PC-9 (cell line): ENCODE measurements at regions of chr19 and their contacts with region 1.

Region 1: DNA sequence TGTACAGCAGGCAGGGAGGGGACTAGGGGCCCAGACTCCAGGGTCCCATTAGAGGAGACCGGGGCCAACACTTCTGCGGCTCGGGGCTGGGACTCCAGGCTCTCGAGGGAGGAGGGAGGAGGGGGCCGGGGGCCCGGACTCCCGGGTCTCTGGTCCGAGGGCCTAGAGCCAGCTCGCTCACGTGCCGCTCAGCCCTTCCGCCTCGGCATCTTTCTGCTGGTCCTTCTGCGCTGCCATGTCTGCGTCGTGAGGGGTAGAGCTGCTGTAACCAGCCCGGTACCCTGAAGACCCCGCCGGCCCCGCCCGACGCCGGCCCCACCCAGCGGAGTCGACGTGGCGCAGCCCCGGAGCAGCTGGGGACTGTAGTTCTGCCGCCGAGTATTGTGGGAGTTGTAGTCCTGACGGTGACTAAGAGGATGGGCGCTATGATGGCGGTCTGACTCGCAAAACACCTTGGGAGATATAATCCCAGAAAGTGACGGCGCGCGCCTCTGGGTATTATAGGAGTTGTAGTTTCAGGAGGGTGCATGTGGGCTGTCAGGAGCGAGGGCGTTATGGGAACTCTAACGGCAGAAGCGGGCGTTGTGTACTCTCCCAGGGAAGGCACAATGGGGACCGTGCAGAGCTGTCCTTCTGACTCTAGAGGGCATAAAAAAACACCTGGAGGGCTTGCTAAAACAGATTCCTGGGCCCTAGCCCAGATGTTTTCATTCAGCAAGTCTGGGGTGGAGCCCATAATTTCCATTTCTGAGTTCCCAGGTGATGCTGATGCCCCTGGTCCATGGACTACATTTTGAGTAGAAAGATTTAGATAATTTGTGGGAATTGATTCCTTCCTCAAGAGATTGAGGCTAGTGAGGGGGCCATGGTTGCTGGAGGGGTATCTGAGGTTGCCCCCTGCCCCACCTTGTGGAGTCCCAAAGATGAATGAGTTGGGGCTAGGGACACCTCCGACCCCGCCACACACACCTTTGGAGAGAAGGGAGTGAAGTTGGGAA is at the start of gene RABAC1:
- DNase-seq: peak; percentile 84 to 86
- H3K4me3 ChIP-seq: peak within 1 kb of the TSS; percentile 67
- H3K27ac ChIP-seq: peak within 1 kb of the TSS; percentile 24; the same call in 1 of the 2 replicates
- H3K4me1 ChIP-seq: peaks cover 11% of the 10 kb centered on the region
- H3K27me3 ChIP-seq: no peaks in the 10 kb centered on the region
- CTCF ChIP-seq: 0 out of 2 replicates have a peak, but pooled peaks have one; percentile 32
- total RNA-seq, gene RABAC1: 110 and 188 TPM in 2 replicates

Region 2: GRCh38 chr19:41753936-41754529 is 205.3 kb before region 1 on chr19:
- CTCF ChIA-PET with region 1: interaction called, 4 read pairs
- POLR2A ChIA-PET with region 1: no interaction called
- intact Hi-C with region 1: loop called (anchors 2 kb)
- DNase-seq: peak in 1 of 2 experiments; percentile 51
- H3K4me3 ChIP-seq: peak overlapping the region; percentile 89; the same call in 1 of the 2 replicates
- H3K27ac ChIP-seq: peak overlapping the region; percentile 85
- H3K4me1 ChIP-seq: peaks cover 35% of the 10 kb centered on the region
- H3K27me3 ChIP-seq: no peaks in the 10 kb centered on the region
- CTCF ChIP-seq: peak; percentile 91

Region 3: GRCh38 chr19:41872775-41873647 is 86.3 kb before region 1 on chr19:
- CTCF ChIA-PET with region 1: interaction called, 11 read pairs
- POLR2A ChIA-PET with region 1: no interaction called
- intact Hi-C with region 1: loop called (anchors 1 kb)
- DNase-seq: peak; percentile 79 to 84
- H3K4me3 ChIP-seq: no peak overlapping the region
- H3K27ac ChIP-seq: no peak overlapping the region
- H3K4me1 ChIP-seq: peaks cover 8% of the 10 kb centered on the region
- H3K27me3 ChIP-seq: no peaks in the 10 kb centered on the region
- CTCF ChIP-seq: peak; percentile 82

Region 4: GRCh38 chr19:41912899-41913537 is 46.3 kb before region 1 on chr19:
- CTCF ChIA-PET with region 1: no interaction called
- POLR2A ChIA-PET with region 1: no interaction called
- intact Hi-C with region 1: no loop called
- DNase-seq: no peak
- H3K4me3 ChIP-seq: no peak overlapping the region
- H3K27ac ChIP-seq: no peak overlapping the region
- H3K4me1 ChIP-seq: no peaks in the 10 kb centered on the region
- H3K27me3 ChIP-seq: peaks cover 39% of the 10 kb centered on the region
- CTCF ChIP-seq: no peak

Region 5: DNA sequence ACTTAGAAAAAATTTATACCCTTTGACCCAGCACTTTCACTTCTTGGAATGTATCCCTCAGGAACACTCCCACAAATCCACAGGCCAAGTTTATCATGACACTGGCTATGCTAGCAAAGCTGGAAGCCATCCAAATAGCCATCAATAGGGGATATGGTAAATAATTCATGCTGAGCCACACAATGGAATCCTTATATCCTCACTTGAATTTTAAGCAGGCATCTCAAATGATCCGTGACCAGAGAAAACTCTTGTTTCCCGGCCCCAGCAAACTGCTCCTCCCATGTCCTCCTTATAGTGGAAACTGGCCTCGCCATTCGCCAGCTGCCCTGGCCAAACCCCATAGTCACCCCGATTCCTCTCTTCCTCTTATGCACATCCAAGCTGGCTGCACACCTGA is 73.1 kb after region 1 on chr19:
- CTCF ChIA-PET with region 1: interaction called, 3 read pairs
- POLR2A ChIA-PET with region 1: no interaction called
- intact Hi-C with region 1: loop called (anchors 1 kb)
- DNase-seq: peak in 1 of 2 experiments; percentile 39
- H3K4me3 ChIP-seq: no peak overlapping the region
- H3K27ac ChIP-seq: no peak overlapping the region
- H3K4me1 ChIP-seq: no peaks in the 10 kb centered on the region; the same call in 1 of the 2 replicates
- H3K27me3 ChIP-seq: peaks cover 14% of the 10 kb centered on the region; the same call in 1 of the 2 replicates
- CTCF ChIP-seq: no peak

Region 6: GRCh38 chr19:42092350-42092749 is 133.0 kb after region 1 on chr19:
- CTCF ChIA-PET with region 1: no interaction called
- POLR2A ChIA-PET with region 1: no interaction called
- intact Hi-C with region 1: loop called (anchors 2 kb)
- DNase-seq: peak; percentile 59 to 71
- H3K4me3 ChIP-seq: no peak overlapping the region
- H3K27ac ChIP-seq: no peak overlapping the region
- H3K4me1 ChIP-seq: 0 out of 2 replicates have a peak, but pooled peaks cover 11% of the 10 kb centered on the region
- H3K27me3 ChIP-seq: no peaks in the 10 kb centered on the region
- CTCF ChIP-seq: peak; percentile 76